Naive thymus-derived CD4-positive, alpha-beta T cell (primary cell): ENCODE measurements at regions of chr5 and their contacts with region 1.

Region 1: DNA sequence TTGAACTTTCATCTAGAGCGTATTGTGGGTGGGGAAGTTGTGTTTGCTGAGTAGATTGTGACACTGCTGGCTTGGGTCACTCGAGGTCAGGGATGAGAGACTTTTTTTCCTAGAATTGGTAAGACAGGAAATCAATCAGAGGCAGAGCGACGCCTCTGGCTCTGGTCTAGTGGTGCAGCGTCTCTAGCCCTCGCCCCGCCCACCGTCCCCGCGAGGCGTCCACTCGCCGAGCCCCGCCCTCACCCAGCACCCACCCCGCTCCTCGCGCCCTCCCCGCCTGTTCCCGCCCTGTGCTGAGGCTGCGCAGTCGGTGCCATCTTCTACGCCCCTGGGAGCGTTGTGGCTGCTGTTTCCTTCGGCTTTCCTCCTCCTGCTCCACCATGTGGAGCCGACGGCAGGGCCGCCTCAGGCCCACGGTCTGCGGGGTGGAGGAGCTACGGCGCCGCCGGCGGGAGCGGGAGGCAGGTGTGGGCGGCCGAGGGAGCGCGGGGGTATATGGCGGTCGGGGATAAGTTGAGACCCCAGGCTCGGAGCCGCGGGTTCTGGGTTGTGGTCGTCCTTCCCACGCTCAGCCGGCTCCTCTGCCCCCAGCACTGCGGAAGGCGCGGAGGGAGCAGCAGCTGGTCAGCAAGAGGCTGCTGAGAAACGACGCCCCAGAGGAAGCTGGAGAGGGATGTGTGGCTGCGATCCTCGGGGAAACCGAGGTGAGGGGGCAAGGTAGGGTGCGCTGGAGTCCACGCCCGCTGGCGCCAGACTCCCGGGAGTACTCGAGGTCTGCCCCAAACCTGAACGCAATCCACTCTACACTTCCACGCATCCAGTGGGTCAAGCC is at the start of gene TMCO6:
- DNase-seq: peak; percentile 89 to 96 (median 94)
- ATAC-seq: peak; percentile 99
- H3K4me3 ChIP-seq: peak within 1 kb of the TSS; percentile 66
- H3K4me3 Mint-ChIP-seq: peak within 1 kb of the TSS; percentile 86 to 97 (median 93)
- H3K27ac ChIP-seq: peak within 1 kb of the TSS; percentile 79
- H3K27ac Mint-ChIP-seq: peak within 1 kb of the TSS; percentile 87 to 100 (median 93)
- H3K4me1 ChIP-seq: peaks cover 6% of the 10 kb centered on the region in 2 donors
- H3K4me1 Mint-ChIP-seq: peaks cover 21 to 54% (median 40%) of the 10 kb centered on the region in 7 donors
- H3K27me3 ChIP-seq: no peaks in the 10 kb centered on the region
- H3K27me3 Mint-ChIP-seq: no peaks in the 10 kb centered on the region
- total RNA-seq, gene TMCO6: 24.5 to 55.3 (median 36.4) TPM

Region 2: GRCh38 chr5:139651853-139652787 is 987.2 kb before region 1 on chr5:
- CTCF ChIA-PET with region 1: no interaction called
- POLR2A ChIA-PET with region 1: no interaction called
- intact Hi-C with region 1: no loop called
- DNase-seq: peak in 3 of 9 donors; percentile 39 to 63 (median 54)
- ATAC-seq: peak; percentile 66
- H3K4me3 ChIP-seq: no peak overlapping the region
- H3K4me3 Mint-ChIP-seq: peak overlapping the region in 6 of 10 donors; percentile 5 to 94 (median 20)
- H3K27ac ChIP-seq: no peak overlapping the region
- H3K27ac Mint-ChIP-seq: peak overlapping the region in 1 of 9 donors; percentile 3
- H3K4me1 ChIP-seq: peaks cover 19 to 33% of the 10 kb centered on the region in 2 donors
- H3K4me1 Mint-ChIP-seq: peaks cover 12 to 44% (median 35%) of the 10 kb centered on the region in 7 donors
- H3K27me3 ChIP-seq: peaks cover 3 to 30% of the 10 kb centered on the region in 2 donors
- H3K27me3 Mint-ChIP-seq: peaks cover 36 to 58% (median 45%) of the 10 kb centered on the region in 5 donors

Region 3: DNA sequence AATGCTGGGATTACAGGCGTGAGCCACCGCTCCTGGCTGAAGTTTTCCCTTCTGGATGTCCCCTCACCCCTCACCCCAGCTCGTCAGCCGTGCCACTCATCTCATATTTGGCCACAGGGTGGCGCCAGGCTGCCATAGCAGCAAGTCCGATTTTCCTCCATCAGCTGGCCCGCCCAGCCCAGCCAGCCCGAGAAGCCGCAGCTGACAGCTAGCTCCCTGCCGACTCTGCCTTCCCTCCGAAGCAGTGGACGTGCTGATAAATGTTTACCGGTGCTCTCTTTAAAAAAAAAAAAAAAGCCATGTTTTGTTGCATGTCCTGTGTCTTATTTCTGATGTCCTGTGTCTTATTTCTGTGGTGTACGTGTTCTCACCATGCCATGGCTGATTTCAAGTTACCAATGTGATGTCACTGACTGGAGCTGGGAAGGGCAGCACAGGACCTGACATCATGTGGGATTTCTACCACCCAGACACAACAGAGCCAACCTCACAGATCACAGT is 394.8 kb before region 1 on chr5:
- CTCF ChIA-PET with region 1: no interaction called
- POLR2A ChIA-PET with region 1: no interaction called
- intact Hi-C with region 1: loop called in 1 of 2 experiments (anchors 5 kb)
- DNase-seq: peak; percentile 62 to 82 (median 74)
- ATAC-seq: peak; percentile 87
- H3K4me3 ChIP-seq: no peak overlapping the region
- H3K4me3 Mint-ChIP-seq: peak overlapping the region in 6 of 10 donors; percentile 0 to 55 (median 44)
- H3K27ac ChIP-seq: no peak overlapping the region
- H3K27ac Mint-ChIP-seq: peak overlapping the region in 8 of 9 donors; percentile 41 to 94 (median 77)
- H3K4me1 ChIP-seq: peaks cover 0 to 14% of the 10 kb centered on the region in 2 donors
- H3K4me1 Mint-ChIP-seq: peaks cover 5 to 43% (median 27%) of the 10 kb centered on the region in 7 donors
- H3K27me3 ChIP-seq: no peaks in the 10 kb centered on the region
- H3K27me3 Mint-ChIP-seq: no peaks in the 10 kb centered on the region

Region 4: GRCh38 chr5:140362860-140363630 is 276.3 kb before region 1 on chr5:
- CTCF ChIA-PET with region 1: interaction called, 7 read pairs
- POLR2A ChIA-PET with region 1: no interaction called
- intact Hi-C with region 1: loop called (anchors 2 kb)
- DNase-seq: peak; percentile 59 to 90 (median 77)
- ATAC-seq: peak; percentile 95
- H3K4me3 ChIP-seq: peak overlapping the region; percentile 57
- H3K4me3 Mint-ChIP-seq: peak overlapping the region; percentile 54 to 83 (median 73)
- H3K27ac ChIP-seq: no peak overlapping the region
- H3K27ac Mint-ChIP-seq: no peak overlapping the region
- H3K4me1 ChIP-seq: peaks cover 0 to 4% of the 10 kb centered on the region in 2 donors
- H3K4me1 Mint-ChIP-seq: peaks cover 0 to 5% (median 4%) of the 10 kb centered on the region in 7 donors
- H3K27me3 ChIP-seq: no peaks in the 10 kb centered on the region
- H3K27me3 Mint-ChIP-seq: peaks cover 0 to 5% (median 0%) of the 10 kb centered on the region in 5 donors

Region 5: GRCh38 chr5:140524003-140524402 is 115.4 kb before region 1 on chr5:
- CTCF ChIA-PET with region 1: no interaction called
- POLR2A ChIA-PET with region 1: no interaction called
- intact Hi-C with region 1: no loop called
- DNase-seq: no peak
- ATAC-seq: no peak
- H3K4me3 ChIP-seq: no peak overlapping the region
- H3K4me3 Mint-ChIP-seq: no peak overlapping the region
- H3K27ac ChIP-seq: no peak overlapping the region
- H3K27ac Mint-ChIP-seq: peak overlapping the region in 5 of 9 donors; percentile 6 to 59 (median 34)
- H3K4me1 ChIP-seq: no peaks in the 10 kb centered on the region
- H3K4me1 Mint-ChIP-seq: peaks cover 0 to 3% (median 0%) of the 10 kb centered on the region in 7 donors
- H3K27me3 ChIP-seq: no peaks in the 10 kb centered on the region
- H3K27me3 Mint-ChIP-seq: no peaks in the 10 kb centered on the region

Region 6: GRCh38 chr5:140557136-140557805 is 82.1 kb before region 1 on chr5 and contains the start of gene SRA1:
- CTCF ChIA-PET with region 1: no interaction called
- POLR2A ChIA-PET with region 1: interaction called, 6 read pairs
- intact Hi-C with region 1: loop called in 1 of 2 experiments (anchors 2 kb)
- DNase-seq: peak; percentile 62 to 91 (median 72)
- ATAC-seq: peak; percentile 94
- H3K4me3 ChIP-seq: peak within 1 kb of the TSS; percentile 73
- H3K4me3 Mint-ChIP-seq: peak within 1 kb of the TSS; percentile 84 to 93 (median 92)
- H3K27ac ChIP-seq: peak within 1 kb of the TSS; percentile 97
- H3K27ac Mint-ChIP-seq: peak within 1 kb of the TSS; percentile 85 to 97 (median 95)
- H3K4me1 ChIP-seq: peaks cover 14 to 20% of the 10 kb centered on the region in 2 donors
- H3K4me1 Mint-ChIP-seq: peaks cover 45 to 63% (median 50%) of the 10 kb centered on the region in 7 donors
- H3K27me3 ChIP-seq: no peaks in the 10 kb centered on the region
- H3K27me3 Mint-ChIP-seq: no peaks in the 10 kb centered on the region
- total RNA-seq, gene SRA1: 23.8 to 45.5 (median 34.0) TPM

Region 7: DNA sequence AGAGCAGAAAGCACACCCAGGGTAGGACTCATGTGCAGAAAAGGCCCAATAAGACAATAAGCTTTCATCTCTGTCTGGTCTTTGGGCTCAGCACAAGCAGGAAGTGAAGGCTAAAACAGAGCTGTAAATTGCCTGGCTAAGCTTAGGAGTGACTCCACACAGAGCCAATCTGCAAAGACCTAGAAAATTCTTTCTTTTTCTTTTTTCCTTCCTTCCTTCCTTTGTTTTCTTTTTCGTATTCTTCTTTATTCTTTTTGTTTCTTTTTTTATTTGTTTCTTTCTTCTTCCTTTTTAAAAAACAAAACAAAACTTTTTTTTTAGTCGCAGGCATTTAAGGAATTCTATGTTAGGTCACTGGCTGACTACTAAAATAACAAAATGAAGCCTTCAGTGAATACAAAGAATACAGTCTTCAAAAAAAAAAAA is 62.6 kb before region 1 on chr5:
- CTCF ChIA-PET with region 1: no interaction called
- POLR2A ChIA-PET with region 1: no interaction called
- intact Hi-C with region 1: no loop called
- DNase-seq: peak in 3 of 9 donors; percentile 23 to 38 (median 28)
- ATAC-seq: peak; percentile 70
- H3K4me3 ChIP-seq: no peak overlapping the region
- H3K4me3 Mint-ChIP-seq: no peak overlapping the region
- H3K27ac ChIP-seq: no peak overlapping the region
- H3K27ac Mint-ChIP-seq: peak overlapping the region in 6 of 9 donors; percentile 2 to 78 (median 63)
- H3K4me1 ChIP-seq: no peaks in the 10 kb centered on the region
- H3K4me1 Mint-ChIP-seq: peaks cover 3 to 15% (median 14%) of the 10 kb centered on the region in 7 donors
- H3K27me3 ChIP-seq: no peaks in the 10 kb centered on the region
- H3K27me3 Mint-ChIP-seq: peaks cover 0 to 14% (median 6%) of the 10 kb centered on the region in 5 donors

Region 8: GRCh38 chr5:140690941-140691924 is 51.9 kb after region 1 on chr5 and contains the starts of genes HARS1 and HARS2:
- CTCF ChIA-PET with region 1: no interaction called
- POLR2A ChIA-PET with region 1: interaction called, 5 read pairs
- intact Hi-C with region 1: loop called (anchors 1 to 2 kb)
- DNase-seq: peak; percentile 55 to 83 (median 71)
- ATAC-seq: peak; percentile 97
- H3K4me3 ChIP-seq: peak within 1 kb of the TSS; percentile 91
- H3K4me3 Mint-ChIP-seq: peak within 1 kb of the TSS; percentile 92 to 100 (median 99)
- H3K27ac ChIP-seq: peak within 1 kb of the TSS; percentile 89
- H3K27ac Mint-ChIP-seq: peak within 1 kb of the TSS; percentile 91 to 99 (median 98)
- H3K4me1 ChIP-seq: peaks cover 16 to 22% of the 10 kb centered on the region in 2 donors
- H3K4me1 Mint-ChIP-seq: peaks cover 29 to 60% (median 53%) of the 10 kb centered on the region in 7 donors
- H3K27me3 ChIP-seq: no peaks in the 10 kb centered on the region
- H3K27me3 Mint-ChIP-seq: no peaks in the 10 kb centered on the region
- total RNA-seq, gene HARS1: 48.7 to 85.7 (median 68.5) TPM
- total RNA-seq, gene HARS2: 25.4 to 59.6 (median 38.8) TPM